Caco-2 (cell line): ENCODE measurements at regions of chr7 and their contacts with region 1.

Region 1: DNA sequence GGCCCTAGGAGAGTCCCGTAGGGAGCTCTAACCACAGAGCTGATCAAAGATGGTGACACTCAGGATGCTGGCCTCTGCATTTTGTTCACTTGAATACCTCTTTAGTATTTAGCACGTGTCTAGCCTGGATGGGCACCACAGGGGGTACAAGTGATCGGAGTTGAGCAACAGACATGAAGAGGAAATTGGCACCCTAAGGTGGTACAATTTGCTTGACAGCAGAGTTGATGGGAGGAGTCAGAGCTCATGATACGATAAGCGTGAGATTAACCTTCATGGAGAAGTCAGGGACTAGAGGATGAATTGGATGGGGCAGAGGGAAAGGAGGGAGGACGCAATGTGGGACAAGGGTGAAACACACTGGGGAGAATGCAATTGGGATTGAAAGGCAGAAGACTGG is 9.9 kb upstream of the ZNF212 start:
- DNase-seq: no peak
- H3K4me3 ChIP-seq: no peak overlapping the region
- H3K4me3 Mint-ChIP-seq: no peak overlapping the region
- H3K27ac Mint-ChIP-seq: peak overlapping the region; percentile 21
- H3K4me1 ChIP-seq: no peaks in the 10 kb centered on the region
- H3K4me1 Mint-ChIP-seq: no peaks in the 10 kb centered on the region
- H3K27me3 ChIP-seq: no peaks in the 10 kb centered on the region
- H3K27me3 Mint-ChIP-seq: no peaks in the 10 kb centered on the region
- CTCF ChIP-seq: no peak

Region 2: GRCh38 chr7:148919859-148920258 is 309.7 kb before region 1 on chr7:
- CTCF ChIA-PET with region 1: no interaction called
- POLR2A ChIA-PET with region 1: no interaction called
- intact Hi-C with region 1: no loop called
- DNase-seq: no peak
- H3K4me3 ChIP-seq: no peak overlapping the region
- H3K4me3 Mint-ChIP-seq: no peak overlapping the region
- H3K27ac Mint-ChIP-seq: no peak overlapping the region
- H3K4me1 ChIP-seq: no peaks in the 10 kb centered on the region
- H3K4me1 Mint-ChIP-seq: peaks cover 12% of the 10 kb centered on the region
- H3K27me3 ChIP-seq: no peaks in the 10 kb centered on the region
- H3K27me3 Mint-ChIP-seq: no peaks in the 10 kb centered on the region
- CTCF ChIP-seq: no peak

Region 3: DNA sequence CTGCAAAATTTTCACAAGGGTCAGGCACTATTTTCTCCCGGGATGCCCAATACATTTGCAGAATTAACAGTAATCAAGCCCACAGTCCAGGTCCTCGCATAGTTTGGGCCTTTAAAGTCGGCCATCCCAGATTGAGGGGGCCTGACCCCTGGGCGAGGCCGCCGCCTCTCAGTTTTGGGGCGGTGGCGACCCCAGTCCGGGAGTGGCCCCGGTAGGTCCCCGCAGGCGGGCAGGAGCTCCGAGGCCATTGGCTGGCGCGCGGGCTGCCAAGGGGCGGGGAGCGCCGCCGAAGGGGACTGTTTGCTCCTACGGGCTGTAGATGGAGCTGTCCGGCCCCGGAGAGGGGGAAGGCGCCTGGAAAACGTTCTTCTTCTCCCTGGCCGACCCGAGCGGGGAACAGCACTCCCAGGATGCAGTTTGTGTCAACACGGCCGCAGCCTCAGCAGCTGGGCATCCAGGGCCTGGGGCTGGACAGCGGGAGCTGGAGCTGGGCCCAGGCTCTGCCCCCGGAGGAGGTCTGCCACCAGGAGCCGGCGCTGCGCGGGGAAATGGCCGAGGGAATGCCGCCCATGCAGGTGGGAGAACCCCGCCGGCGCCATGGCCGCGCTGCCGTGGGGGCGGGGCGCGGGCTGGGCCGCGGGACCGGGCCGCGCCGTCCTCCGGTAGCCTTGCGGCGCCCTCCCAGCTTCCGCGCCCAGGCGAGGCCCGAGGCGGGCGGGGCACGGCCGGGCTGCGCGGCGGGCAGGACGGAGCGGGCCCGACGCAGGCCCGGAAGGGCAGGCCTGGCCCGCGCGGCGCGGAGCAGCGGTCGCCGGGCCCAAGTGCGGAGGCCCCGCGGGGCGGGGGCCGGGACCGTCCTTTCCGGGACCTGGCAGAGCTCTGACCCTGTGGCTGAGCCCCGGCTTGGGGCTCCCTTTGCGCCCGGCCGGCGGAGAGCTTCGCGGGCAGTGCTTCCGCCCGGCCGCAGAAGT is 34.1 kb before region 1 on chr7 and contains the start of gene ZNF282:
- CTCF ChIA-PET with region 1: no interaction called
- POLR2A ChIA-PET with region 1: no interaction called
- intact Hi-C with region 1: loop called (anchors 2 kb)
- DNase-seq: peak; percentile 94 to 96
- H3K4me3 ChIP-seq: peak within 1 kb of the TSS; percentile 94
- H3K4me3 Mint-ChIP-seq: peak within 1 kb of the TSS; percentile 85
- H3K27ac Mint-ChIP-seq: peak within 1 kb of the TSS; percentile 87
- H3K4me1 ChIP-seq: no peaks in the 10 kb centered on the region; the same call in 1 of the 2 replicates
- H3K4me1 Mint-ChIP-seq: no peaks in the 10 kb centered on the region
- H3K27me3 ChIP-seq: no peaks in the 10 kb centered on the region
- H3K27me3 Mint-ChIP-seq: no peaks in the 10 kb centered on the region
- CTCF ChIP-seq: peak; percentile 49 to 82
- total RNA-seq, gene ZNF282: 35.7 and 44.0 TPM in 2 replicates

Region 4: DNA sequence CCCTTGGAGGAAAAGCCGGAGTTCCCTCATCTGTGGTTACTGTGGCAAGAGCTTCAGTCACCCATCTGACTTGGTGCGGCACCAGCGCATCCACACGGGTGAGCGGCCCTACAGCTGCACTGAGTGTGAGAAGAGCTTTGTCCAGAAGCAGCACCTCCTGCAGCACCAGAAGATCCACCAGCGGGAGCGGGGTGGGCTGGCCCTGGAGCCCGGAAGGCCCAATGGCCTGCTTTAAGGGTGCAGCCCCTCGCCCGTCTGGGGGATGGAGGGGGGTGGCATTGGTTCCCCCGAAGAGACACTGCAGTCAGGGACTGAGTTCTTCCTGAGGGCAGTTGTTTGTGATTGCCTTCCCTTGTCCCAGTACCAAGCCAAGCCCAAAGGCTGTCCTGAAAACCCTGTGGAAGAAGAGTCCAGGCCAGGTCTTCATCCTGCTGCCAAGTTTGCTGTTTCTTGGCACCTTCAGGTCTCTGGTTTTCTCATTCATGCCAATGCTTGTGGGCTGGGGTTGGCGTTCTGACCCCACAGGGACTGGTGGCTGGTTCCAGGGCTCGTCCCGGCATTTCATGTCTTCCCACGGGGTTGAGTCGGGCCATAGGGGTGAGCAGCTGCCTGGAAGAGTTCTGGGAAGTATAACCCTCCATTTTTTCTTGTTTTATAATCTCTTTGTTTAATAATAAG is 24.8 kb after region 1 on chr7:
- CTCF ChIA-PET with region 1: no interaction called
- POLR2A ChIA-PET with region 1: no interaction called
- intact Hi-C with region 1: no loop called
- DNase-seq: no peak
- H3K4me3 ChIP-seq: no peak overlapping the region
- H3K4me3 Mint-ChIP-seq: no peak overlapping the region
- H3K27ac Mint-ChIP-seq: no peak overlapping the region
- H3K4me1 ChIP-seq: no peaks in the 10 kb centered on the region
- H3K4me1 Mint-ChIP-seq: no peaks in the 10 kb centered on the region
- H3K27me3 ChIP-seq: no peaks in the 10 kb centered on the region
- H3K27me3 Mint-ChIP-seq: no peaks in the 10 kb centered on the region
- CTCF ChIP-seq: no peak